AG04449 (cell line): ENCODE measurements at regions of chr22 and their contacts with region 1.

Region 1: DNA sequence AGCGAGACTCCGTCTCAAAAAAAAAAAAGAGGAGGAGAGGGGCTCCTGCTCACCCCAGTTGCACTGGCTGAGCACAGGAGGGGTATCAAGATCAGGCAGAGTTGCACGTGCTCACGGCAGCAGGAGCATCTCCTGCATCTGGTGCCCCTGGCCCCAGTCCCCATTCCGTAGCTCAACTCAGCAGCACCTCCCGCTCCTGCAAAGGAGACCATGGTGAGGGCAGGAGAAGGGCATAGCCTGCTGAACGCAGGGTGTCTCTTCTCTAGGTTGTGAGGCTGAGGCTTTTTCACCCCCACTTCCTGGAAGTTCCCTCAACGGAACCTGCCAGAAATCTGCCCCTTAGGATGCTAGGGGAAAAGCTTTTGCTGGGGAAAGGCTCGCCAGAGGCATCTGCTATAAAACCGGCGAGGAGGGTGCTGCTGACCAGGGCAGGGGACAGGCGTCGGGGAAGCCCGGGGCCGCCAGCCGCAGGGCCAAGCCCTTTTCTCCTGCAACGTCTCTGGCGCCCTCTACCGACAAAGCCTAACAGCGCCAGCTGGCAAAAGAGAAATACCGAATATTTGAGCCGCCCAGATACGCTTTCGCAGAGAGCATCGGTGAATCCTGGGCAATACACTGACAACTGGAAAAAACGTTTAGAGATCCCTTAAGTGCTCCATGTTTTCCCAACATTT is 1.0 kb upstream of the PPP6R2 start:
- DNase-seq: no peak
- H3K4me3 ChIP-seq: peak overlapping the region; percentile 72
- CTCF ChIP-seq: peak; percentile 94

Region 2: GRCh38 chr22:50244420-50245213 is 97.5 kb before region 1 on chr22 and contains the start of gene TUBGCP6:
- CTCF ChIA-PET with region 1: interaction called, 92 read pairs
- POLR2A ChIA-PET with region 1: no interaction called
- DNase-seq: peak; percentile 24
- H3K4me3 ChIP-seq: peak within 1 kb of the TSS; percentile 98
- CTCF ChIP-seq: peak; percentile 19

Region 3: GRCh38 chr22:50260801-50261614 is 81.1 kb before region 1 on chr22:
- CTCF ChIA-PET with region 1: interaction called, 22 read pairs
- POLR2A ChIA-PET with region 1: interaction called, 5 read pairs
- DNase-seq: no peak
- H3K4me3 ChIP-seq: peak overlapping the region; percentile 70
- CTCF ChIP-seq: no peak

Region 4: GRCh38 chr22:50276143-50276542 is 66.0 kb before region 1 on chr22:
- CTCF ChIA-PET with region 1: interaction called, 31 read pairs
- POLR2A ChIA-PET with region 1: no interaction called
- DNase-seq: no peak
- H3K4me3 ChIP-seq: no peak overlapping the region
- CTCF ChIP-seq: peak; percentile 74

Region 5: DNA sequence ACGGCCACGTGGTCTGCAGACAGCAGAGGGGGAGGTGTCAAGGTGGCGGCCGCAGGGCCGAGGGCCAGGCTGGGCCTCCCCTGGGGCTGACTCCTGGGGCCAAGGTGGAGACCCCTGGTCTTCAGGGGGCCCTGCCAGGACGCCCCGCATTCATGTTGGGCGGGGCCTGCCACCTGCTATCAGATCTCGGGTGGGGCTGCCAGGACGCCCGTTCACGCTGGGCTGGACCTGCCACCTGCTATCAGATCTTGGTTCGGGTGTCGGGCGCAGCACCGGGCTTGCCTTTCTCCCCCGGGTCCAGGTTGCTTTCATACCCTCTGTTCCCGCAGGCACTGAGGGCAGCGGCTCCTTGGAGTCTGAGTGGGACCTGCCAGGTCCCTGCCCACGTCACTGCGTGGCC is 55.8 kb before region 1 on chr22:
- CTCF ChIA-PET with region 1: no interaction called
- POLR2A ChIA-PET with region 1: no interaction called
- DNase-seq: no peak
- H3K4me3 ChIP-seq: no peak overlapping the region
- CTCF ChIP-seq: no peak

Region 6: DNA sequence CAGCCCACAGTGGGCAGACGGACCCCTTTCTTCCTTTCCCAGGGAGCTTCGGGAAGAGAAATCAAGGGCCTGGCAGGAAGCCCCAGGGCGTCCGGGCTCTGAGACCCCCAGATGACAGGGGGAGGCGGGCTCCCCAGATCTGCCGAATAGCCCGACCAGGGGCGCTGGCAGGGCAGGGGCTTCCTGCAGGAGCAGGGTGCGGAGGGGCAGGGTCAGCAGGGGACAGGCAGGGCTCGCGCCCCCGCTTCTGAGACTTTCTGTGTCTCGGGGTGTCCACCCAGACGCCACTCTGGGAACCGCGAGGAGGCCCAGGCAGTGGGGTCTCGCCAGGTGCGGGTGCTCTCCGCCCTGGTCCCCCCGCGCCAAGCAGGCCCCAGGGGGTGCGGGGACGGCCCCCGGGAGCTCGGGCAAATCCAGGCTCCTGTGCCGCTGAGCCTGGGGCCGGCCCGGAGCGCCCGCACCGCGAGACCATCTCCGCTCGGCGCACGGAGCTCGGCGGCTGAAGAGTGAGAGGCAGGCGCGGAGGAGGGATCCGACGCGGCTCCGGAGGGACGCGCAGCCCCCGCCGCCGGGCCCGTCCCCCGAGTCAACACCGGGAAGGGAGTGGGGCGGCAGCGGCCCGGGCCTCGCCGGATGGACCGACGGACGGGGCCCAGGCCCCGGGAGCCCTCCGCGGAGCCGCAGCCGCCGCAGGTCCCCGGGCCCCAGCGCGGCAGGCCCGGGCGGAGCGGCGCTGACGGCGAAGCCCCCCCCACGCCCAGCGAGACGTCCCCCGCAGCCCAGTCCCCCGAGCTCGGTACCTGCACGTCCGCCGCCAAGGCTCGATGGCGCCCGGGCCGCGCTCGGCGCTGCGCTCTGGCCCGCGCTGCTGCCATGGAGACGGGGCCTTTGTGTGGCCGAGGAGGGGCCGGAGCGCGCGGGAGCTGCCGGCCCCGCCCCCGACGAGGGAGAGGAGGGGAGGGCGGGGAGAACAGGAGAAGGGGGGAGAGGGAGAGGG is 35.1 kb before region 1 on chr22 and contains the start of gene PLXNB2:
- CTCF ChIA-PET with region 1: interaction called, 24 read pairs
- POLR2A ChIA-PET with region 1: no interaction called
- DNase-seq: no peak
- H3K4me3 ChIP-seq: peak within 1 kb of the TSS; percentile 89
- CTCF ChIP-seq: no peak

Region 7: DNA sequence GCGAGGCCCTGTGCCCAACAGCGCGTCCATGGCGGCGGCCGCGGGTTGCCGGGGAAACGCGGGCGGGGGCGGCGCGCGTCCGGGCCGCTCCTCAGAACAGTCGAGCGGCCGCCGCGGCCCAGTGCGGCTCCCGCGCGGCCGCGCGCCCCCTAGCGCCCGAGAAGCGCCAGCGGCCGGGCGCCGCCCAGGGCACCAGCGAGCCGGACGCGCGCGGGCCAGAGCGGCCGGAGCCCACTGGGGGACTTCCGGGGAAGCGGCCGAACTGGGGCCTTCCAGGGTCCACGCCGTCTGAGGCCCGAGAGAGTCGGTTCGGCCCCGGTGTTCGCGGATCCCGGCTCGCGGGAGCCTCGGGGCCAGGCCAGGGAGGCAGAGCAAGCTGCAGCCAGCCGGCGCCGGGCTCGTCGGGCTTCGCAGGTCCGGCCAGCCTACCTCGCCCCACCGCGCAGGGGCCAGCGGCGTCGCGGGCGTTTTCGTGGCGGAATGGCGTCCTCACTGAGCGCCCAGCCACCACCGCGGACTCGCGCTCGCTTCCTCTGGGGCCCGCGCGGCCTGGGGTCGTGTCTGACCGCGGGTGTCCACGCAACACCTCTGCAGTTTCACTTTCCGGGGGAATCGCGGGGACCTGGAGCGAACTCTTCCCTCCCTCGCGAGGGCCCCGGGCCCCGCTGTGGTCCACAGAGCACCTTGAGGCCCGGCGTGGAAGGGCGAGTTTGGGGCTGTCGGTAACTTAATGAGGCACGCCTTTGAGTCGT is 15.0 kb before region 1 on chr22 and contains the start of gene DENND6B:
- CTCF ChIA-PET with region 1: interaction called, 54 read pairs
- POLR2A ChIA-PET with region 1: no interaction called
- DNase-seq: no peak
- H3K4me3 ChIP-seq: peak within 1 kb of the TSS; percentile 66
- CTCF ChIP-seq: peak; percentile 15

Region 8: DNA sequence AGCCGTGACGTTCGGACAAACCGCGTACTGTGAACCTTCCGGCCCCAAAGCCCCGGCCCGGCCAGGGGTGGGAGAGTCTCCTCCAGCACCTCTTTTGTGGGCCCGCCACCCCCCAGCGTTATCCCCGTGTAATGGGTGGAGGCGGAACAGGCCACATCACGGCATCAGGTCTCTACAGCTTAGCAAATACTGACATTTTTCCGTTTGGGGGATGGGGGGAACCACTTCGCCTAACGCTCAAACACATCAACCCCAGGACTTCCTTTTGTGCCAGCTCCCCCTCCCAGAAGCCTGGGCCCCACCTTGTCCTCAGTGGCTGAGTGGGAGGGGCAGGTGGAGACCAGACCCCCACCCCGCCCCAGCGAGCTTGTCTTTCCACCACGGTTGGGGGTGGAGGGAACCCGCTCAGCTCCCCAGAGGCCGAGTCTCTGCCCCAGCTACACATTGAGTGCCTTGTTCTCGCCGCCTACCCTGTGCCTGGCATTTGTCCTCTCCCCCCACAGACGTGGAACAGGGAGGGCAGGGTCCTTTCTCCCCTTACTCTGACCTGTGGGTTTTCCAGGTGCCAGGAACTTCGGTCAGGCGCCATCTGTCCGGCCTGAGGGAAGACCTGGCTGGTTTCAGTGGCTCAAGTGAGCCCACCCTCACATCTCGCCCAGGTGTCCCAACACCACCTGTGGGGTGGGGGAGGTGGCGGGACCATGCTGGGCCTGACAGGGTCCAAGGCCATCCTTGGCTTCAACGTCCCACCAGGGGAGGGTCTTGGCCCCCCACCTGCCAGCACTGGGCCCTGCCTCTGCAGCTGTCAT is 103.2 kb after region 1 on chr22:
- CTCF ChIA-PET with region 1: no interaction called
- POLR2A ChIA-PET with region 1: no interaction called
- DNase-seq: no peak
- H3K4me3 ChIP-seq: no peak overlapping the region
- CTCF ChIP-seq: no peak